ENCODE measurements at regions of chr7 and their contacts with region 1.

Region 1: GRCh38 chr7:12686894-12687717 is at the start of gene ARL4A:
- DNase-seq: peak; percentile 98
- ATAC-seq: peak; percentile 97
- total RNA-seq, gene ARL4A: 10.1 TPM

Region 2: DNA sequence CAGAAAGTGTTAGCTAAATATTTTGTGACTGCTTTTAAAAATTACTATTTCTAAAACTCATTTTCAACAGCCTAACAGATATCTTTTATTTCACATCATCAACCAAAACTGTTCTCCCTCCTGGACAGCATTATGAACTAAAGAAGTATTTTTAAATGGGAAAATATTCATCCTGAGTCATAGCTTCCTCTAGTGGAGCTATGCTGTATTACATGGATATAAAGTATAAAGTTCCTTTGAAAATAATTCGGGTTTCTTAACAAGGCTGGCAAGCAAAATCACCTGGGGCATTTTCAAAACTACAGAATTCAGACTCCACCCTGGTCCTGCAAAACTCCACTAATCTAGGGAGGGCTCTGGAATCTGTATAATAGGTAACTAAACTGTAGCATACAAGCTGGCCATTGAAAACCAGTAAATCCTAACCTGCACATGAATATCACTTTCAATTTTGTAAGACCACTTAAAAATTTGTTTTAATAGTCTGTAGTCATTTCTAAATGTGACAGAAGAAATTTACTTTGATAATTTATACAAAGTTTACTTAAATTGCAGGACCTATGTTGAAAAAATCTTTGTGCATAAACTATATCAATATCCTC is 63.1 kb before region 1 on chr7:
- intact Hi-C with region 1: no loop called
- DNase-seq: no peak
- ATAC-seq: no peak

Region 3: DNA sequence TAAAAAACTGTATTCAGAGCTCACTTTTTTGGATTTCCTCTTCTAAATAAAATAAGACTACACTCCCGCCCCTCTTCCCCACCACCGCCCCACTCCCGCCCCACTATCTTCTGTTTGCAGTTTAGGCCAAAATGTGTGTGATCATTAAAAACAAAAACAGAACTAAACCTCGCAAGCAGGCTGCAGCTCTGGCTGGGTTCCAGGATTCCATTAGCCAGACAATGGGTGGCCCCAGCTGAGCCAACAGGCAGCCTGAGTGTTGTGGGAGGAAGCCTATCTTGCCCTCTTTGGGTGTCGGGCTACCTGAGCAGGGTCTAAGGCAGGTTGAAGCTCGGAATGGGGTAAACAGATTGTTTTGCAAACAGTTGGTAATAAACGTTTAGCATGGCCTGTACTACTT is 42.0 kb after region 1 on chr7:
- intact Hi-C with region 1: loop called (anchors 2 kb)
- DNase-seq: peak; percentile 86
- ATAC-seq: peak; percentile 73

Region 4: GRCh38 chr7:13024121-13024674 is 337.1 kb after region 1 on chr7:
- intact Hi-C with region 1: loop called (anchors 5 kb)
- DNase-seq: no peak
- ATAC-seq: no peak

Region 5: DNA sequence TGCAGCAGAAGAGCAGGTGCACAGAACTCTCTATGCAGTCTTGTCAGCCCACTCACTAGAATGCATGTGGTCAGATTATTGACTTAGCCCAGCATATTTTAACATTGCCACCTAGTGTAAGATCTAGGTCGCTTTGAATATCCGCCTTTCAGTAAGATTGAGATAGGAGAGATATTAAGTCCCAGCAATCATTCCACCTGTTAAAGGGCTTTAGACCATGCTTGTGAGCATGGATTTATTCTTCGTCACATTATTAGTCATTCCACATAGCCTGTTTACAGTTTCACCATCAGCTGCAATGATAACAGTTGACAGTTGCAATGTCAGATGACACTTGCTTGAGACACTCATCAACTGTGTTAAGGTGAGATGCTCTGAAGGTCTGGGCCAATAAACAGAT is 492.0 kb after region 1 on chr7:
- intact Hi-C with region 1: loop called (anchors 5 kb)
- DNase-seq: no peak
- ATAC-seq: peak; percentile 34

Measured in Right ventricle myocardium inferior (tissue), 1 donor.